ENCODE measurements at regions of chr1 and their contacts with region 1.

Region 1: GRCh38 chr1:147377263-147378246 is 135.1 kb downstream of the CHD1L start:
- DNase-seq: no peak
- ATAC-seq: no peak
- H3K4me3 ChIP-seq: no peak overlapping the region
- H3K27ac ChIP-seq: no peak overlapping the region
- H3K4me1 ChIP-seq: no peaks in the 10 kb centered on the region
- CTCF ChIP-seq: no peak
- EP300 ChIP-seq: no peak
- POLR2A ChIP-seq: no peak
- RAD21 ChIP-seq: no peak

Region 2: DNA sequence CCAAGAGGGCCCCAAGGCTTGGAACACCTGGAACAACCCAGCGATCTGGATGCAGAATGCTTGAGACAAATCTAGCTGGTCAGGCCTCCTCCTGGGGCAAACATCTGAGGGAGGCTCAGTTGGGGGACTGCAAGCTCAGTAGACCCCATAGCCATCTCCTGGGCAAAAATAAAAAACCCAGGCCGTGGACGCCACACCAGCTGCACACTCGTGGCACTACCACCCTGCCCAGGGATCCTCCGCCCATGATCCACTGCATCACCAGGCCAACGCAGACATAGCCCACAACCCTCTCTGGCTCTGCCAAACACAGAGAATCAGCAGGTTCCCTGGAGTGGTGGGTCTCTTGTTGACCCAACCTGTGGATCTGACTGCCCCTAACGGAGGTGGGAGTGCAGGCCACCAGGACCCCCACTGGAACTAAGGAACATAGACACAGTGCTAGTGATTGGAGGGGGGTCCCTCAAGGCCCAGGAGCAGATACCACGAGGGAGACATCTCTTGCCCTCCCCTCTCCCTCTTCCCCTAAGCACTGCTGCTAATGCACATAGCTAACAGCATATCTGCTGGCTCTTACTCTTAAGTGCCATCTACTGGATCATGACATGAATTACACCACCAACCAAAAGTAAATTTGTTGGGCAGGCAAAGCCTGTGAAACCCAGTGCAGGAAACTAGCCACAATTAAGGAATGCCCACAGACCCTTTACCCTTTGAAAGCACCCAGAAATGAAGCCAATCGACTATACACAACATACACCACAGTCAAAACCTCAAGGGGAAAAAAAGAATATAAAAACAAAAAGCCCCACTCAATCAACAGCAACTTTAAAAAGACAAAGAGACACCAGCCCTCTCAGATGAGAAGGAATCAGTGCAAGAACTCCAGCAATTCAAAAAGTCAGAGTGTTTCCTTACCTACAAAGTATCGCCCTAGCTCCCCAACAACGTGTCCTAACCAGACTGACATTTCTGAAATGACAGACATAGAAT is 12.3 kb after region 1 on chr1:
- CTCF ChIA-PET with region 1: interaction called, 11 read pairs
- POLR2A ChIA-PET with region 1: no interaction called
- DNase-seq: peak; percentile 28 to 45
- ATAC-seq: peak; percentile 78 to 85
- H3K4me3 ChIP-seq: no peak overlapping the region
- H3K27ac ChIP-seq: no peak overlapping the region
- H3K4me1 ChIP-seq: no peaks in the 10 kb centered on the region
- CTCF ChIP-seq: peak; percentile 53
- EP300 ChIP-seq: no peak
- POLR2A ChIP-seq: no peak
- RAD21 ChIP-seq: peak; percentile 40 to 61; a peak in 3 of 5 replicates

Measured in A549 (cell line).